ENCODE measurements at regions of chr20 and their contacts with region 1.

Region 1: DNA sequence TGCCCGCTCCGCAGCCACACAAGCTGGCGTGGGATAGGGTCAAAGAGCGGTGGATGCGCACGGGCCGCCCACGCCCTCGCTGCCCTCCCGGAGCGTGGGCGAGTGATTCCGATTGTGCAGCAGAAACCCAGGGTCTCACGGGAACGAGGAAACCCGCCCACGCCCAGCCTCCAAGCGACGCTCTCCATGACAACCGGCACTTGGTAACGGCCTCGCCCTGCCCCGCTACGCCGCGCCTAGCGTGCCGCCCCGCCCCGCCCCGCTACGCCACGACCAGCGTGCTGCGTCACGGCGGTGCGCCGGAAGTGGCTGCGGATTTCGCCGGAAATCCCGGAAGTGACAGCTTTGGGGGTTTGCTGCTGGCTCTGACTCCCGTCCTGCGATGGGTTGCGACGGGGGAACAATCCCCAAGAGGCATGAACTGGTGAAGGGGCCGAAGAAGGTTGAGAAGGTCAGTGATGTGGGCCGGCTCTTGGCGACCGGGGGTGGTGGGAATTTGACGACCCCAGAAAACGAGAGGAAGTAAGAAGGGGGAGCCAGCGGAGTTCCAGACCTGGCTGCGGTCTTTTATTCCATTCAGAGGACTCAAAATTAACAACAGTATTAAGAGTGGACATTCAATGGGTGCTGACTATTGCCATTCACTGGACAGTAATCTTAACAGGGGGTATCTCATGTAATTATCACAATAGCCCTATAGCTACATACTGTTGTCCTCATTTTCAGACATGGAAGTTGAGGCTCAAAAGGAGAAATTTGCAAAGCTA is at the start of gene RTF2:
- DNase-seq: peak; percentile 96 to 98 (median 97)
- ATAC-seq: peak; percentile 100
- H3K4me3 ChIP-seq: peak within 1 kb of the TSS; percentile 81
- H3K27ac ChIP-seq: peak within 1 kb of the TSS; percentile 52
- H3K4me1 ChIP-seq: no peaks in the 10 kb centered on the region
- H3K27me3 ChIP-seq: no peaks in the 10 kb centered on the region
- total RNA-seq, gene RTF2: 73.4 to 80.4 (median 79.5) TPM

Region 2: DNA sequence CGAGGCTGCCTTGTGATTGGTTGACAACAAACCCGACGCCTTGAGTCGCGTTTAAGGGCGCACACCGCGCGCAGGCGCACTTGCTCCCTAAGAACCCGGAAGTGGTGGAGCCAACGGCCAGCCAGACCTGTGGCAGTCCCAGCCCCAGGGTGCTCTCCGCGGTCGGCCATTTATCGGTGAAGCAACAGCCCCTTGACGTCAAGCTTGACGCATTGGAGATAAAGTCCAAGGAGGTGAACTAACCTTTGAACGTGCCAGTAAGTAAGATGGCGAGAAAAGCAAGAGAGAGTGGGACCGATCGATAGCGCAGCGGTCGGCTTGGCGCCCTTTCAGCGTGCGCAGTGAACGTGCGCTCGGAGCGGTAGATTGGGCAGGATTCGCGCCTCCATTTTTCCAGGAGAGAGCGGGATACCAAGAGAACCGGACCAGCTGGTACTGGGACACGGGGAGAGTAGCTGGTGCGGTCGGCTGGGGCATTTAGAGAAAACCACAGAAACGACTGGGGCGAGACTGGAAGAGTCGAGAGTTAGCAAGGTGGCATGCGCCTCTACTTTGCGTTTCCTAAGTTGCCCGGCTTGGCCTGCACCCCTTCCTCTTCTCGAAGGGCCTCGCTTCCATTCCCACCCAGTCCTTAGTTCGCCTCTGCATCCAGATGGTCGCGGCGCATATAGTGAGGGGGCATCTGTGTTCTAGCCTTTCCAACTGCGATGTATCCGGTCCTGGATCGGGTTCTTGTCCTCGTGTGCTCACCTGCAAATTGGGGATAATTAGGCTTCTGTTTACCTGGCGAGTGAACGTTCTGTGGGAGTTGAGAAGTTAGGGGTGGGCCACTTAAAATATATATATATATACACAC is 76.0 kb before region 1 on chr20 and contains the start of gene CSTF1:
- intact Hi-C with region 1: loop called in 2 of 4 experiments (anchors 5 to 10 kb)
- DNase-seq: peak; percentile 100
- ATAC-seq: peak; percentile 98 to 99
- H3K4me3 ChIP-seq: peak within 1 kb of the TSS; percentile 87
- H3K27ac ChIP-seq: peak within 1 kb of the TSS; percentile 73
- H3K4me1 ChIP-seq: peaks cover 7% of the 10 kb centered on the region
- H3K27me3 ChIP-seq: no peaks in the 10 kb centered on the region
- total RNA-seq, gene CSTF1: 19.1 to 23.2 (median 19.8) TPM

Region 3: DNA sequence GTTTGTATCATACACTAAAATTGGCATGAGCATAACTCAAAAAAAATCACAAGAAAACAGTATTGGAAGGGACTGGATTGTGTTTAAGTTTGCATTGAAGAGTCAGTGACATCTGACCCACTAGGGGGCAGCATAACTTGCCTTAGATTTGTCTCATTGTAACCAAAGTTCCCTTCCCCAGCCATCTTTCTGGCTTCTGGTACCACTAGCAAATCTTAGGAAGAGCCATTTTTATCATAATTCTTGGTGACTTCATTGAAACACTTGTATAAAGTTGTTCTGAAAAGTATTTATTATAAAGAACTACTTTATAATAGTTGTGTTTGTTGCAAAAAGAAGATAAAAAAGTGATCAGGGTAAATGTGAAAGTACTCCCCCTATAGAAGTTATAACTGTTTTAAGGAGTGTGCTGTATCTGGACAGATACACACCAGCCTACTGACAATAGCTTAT is 68.4 kb before region 1 on chr20:
- intact Hi-C with region 1: loop called in 3 of 4 experiments (anchors 5 to 10 kb)
- DNase-seq: no peak
- ATAC-seq: peak in 1 of 2 donors; percentile 40
- H3K4me3 ChIP-seq: no peak overlapping the region
- H3K27ac ChIP-seq: no peak overlapping the region
- H3K4me1 ChIP-seq: no peaks in the 10 kb centered on the region
- H3K27me3 ChIP-seq: no peaks in the 10 kb centered on the region

Region 4: DNA sequence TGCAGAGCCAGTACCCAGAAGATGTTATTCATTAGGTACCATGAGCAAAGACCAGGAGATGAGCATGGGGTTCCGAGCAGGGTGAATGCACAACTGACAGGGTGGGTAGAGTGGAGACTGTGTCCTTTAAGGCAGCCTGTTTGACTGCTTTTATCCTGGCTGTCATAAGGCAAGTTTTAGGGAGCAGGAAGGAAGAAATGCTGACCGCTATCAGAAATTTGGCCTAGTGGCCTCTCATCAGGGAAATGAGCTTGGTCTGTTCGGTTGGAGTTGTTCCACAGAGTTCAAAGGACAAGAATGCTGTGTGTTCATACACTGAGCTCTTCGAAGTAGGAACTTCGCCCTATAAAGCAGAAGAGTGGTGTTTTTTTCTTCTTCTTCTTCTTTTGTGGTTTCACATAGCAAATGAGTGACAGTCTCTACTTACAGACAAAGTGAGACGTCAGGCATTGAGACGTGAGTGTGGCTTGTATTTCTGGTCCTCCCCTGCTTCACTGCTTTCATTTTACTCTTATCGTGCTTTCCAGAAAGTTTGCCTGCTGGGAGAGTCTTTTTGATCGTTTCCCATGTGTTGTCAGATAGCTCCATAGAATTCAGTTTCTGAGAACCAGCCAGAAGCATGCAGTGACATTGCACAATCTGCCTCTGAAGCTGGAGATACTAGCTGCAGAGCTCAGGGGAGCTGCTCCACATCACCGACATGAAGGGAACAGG is 56.6 kb before region 1 on chr20 and contains the start of gene CASS4:
- intact Hi-C with region 1: loop called in 2 of 4 experiments (anchors 10 kb)
- DNase-seq: no peak
- ATAC-seq: peak; percentile 82 to 83
- H3K4me3 ChIP-seq: peak within 1 kb of the TSS; percentile 9
- H3K27ac ChIP-seq: peak within 1 kb of the TSS; percentile 83
- H3K4me1 ChIP-seq: no peaks in the 10 kb centered on the region
- H3K27me3 ChIP-seq: no peaks in the 10 kb centered on the region
- total RNA-seq, gene CASS4: 0.51 to 0.79 (median 0.64) TPM

Measured in right cardiac atrium (tissue), 5 donors.